Endothelial cell of umbilical vein (primary cell): ENCODE measurements at regions of chr12 and their contacts with region 1.

Region 1: DNA sequence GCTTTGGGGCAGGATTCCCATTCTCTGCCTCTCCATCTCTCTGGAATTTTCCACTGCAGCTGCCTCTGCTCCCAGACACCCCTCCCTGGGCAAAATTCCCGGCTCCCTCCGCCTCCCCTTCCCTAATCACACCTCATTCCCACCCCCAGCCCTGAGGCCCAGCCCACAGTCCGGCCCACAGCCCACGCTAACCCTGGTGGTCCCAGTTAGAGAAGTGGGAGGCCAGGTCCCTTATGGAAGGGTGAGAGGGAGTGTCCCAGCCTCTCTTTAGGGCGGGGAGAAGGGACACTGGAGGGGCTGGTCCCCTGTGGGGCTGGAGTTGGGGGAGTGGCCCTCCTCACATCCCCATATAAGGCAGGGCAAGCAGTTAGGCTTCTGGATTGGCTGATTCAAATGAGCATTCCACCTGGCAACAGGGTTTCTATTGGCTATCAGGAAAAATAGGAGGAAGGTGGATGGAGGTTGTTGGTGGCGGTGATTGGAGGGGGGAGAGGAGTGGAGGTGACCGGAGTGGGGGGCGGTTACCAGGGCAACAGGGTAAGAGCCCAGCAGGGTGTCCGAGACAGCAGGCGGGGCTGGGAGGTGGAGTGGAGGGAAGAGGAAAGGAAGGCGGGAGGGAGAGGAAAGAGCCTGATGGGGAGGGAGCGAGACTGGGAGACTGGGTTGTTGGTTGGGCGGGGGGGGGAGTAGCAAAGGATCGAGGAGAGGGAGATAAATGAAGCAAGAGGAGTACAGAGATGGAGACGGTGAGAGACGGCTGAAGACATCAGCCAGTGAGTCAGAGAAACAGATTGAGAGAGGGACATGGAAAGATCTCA is 1.9 kb upstream of the PTMS start:
- DNase-seq: peak; percentile 99
- H3K4me3 ChIP-seq: peak overlapping the region in 1 of 3 experiments; percentile 36
- H3K27ac ChIP-seq: peak overlapping the region; percentile 70
- H3K4me1 ChIP-seq: peaks cover 38% of the 10 kb centered on the region
- H3K27me3 ChIP-seq: peaks cover 0 to 2% of the 10 kb centered on the region in 2 experiments
- CTCF ChIP-seq: no peak
- POLR2A ChIP-seq: no peak

Region 2: DNA sequence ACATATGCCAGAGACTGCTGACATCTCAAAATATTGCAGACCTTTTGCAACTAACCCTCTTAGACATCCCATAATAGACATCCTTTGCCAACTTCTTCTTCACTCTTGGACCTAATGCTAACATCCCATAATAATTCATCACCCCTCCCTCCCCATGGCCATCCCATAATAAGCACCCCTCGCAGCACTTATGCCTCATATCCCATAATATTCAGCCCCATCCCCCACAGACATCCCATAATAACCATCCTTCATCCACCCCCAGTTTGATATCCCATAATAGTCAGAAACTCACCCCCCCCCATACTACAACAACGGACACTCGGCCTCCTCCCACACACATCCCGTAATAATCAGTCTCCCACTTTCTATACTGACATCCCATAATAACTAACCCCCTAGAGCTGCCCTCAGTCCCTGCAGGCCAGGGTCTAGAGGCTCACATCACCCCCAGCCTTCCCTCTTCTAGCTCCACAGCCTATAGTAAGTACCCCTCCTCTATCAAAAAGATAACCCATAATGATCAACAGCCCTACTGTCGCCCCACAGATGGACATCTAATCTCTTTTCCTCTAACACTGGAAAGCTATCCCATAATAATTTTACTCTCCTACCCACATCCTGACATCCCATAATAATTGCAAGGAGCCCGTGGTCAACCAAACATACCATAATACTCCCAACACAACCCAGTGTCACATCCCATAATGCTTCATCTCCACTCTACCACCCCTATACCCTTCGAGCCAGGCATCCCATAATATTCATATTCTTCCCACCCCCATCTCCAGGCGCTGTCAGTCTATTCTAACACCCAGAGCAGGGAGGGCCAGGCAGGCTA is 156.2 kb before region 1 on chr12:
- CTCF ChIA-PET with region 1: interaction called, 3 read pairs
- POLR2A ChIA-PET with region 1: no interaction called
- dilution Hi-C with region 1: no loop called
- intact Hi-C with region 1: loop called (anchors 2 kb)
- DNase-seq: peak; percentile 42
- H3K4me3 ChIP-seq: no peak overlapping the region
- H3K27ac ChIP-seq: no peak overlapping the region
- H3K4me1 ChIP-seq: peaks cover 36% of the 10 kb centered on the region
- H3K27me3 ChIP-seq: no peaks in the 10 kb centered on the region
- CTCF ChIP-seq: no peak
- POLR2A ChIP-seq: no peak

Region 3: GRCh38 chr12:6723607-6724396 is 40.4 kb before region 1 on chr12 and contains the start of gene COPS7A:
- CTCF ChIA-PET with region 1: interaction called, 12 read pairs
- POLR2A ChIA-PET with region 1: interaction called, 9 read pairs
- dilution Hi-C with region 1: no loop called
- intact Hi-C with region 1: loop called (anchors 1 kb)
- DNase-seq: peak; percentile 98
- H3K4me3 ChIP-seq: peak within 1 kb of the TSS; percentile 45 to 48 (median 47)
- H3K27ac ChIP-seq: peak within 1 kb of the TSS; percentile 52
- H3K4me1 ChIP-seq: peaks cover 11% of the 10 kb centered on the region
- H3K27me3 ChIP-seq: no peaks in the 10 kb centered on the region
- CTCF ChIP-seq: no peak
- POLR2A ChIP-seq: peak; percentile 35
- total RNA-seq, gene COPS7A: 36.5 and 41.1 TPM in 2 replicates

Region 4: GRCh38 chr12:6778574-6779550 is 14.6 kb after region 1 on chr12:
- CTCF ChIA-PET with region 1: interaction called, 70 read pairs
- POLR2A ChIA-PET with region 1: interaction called, 16 read pairs
- dilution Hi-C with region 1: no loop called
- intact Hi-C with region 1: loop called (anchors 1 kb)
- DNase-seq: peak; percentile 94
- H3K4me3 ChIP-seq: peak overlapping the region in 1 of 3 experiments; percentile 6
- H3K27ac ChIP-seq: no peak overlapping the region
- H3K4me1 ChIP-seq: peaks cover 5% of the 10 kb centered on the region
- H3K27me3 ChIP-seq: no peaks in the 10 kb centered on the region
- CTCF ChIP-seq: peak; percentile 93 to 95
- POLR2A ChIP-seq: peak; percentile 22

Region 5: DNA sequence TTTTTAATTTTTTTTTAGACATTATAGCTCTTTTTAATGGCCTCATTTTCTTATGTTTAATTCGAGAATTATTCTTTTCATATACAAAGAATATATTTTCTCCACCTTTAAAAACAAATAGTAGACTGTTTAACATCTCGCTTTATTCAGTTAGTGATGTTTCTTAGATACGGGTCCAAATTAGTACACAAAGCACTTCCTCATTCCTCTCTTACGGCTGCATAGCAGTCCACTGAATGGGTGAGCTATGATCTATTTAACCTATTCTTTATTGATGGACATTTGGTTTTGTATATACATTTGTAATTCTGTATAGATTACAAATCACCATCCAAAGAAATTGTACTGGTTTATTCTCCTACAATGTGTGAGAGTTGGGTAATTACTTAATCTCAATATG is 49.1 kb after region 1 on chr12:
- CTCF ChIA-PET with region 1: interaction called, 11 read pairs
- POLR2A ChIA-PET with region 1: interaction called, 4 read pairs
- dilution Hi-C with region 1: no loop called
- intact Hi-C with region 1: no loop called
- DNase-seq: no peak
- H3K4me3 ChIP-seq: no peak overlapping the region
- H3K27ac ChIP-seq: no peak overlapping the region
- H3K4me1 ChIP-seq: no peaks in the 10 kb centered on the region
- H3K27me3 ChIP-seq: peaks cover 0 to 11% of the 10 kb centered on the region in 2 experiments
- CTCF ChIP-seq: no peak
- POLR2A ChIP-seq: no peak

Region 6: GRCh38 chr12:6825398-6826124 is 61.3 kb after region 1 on chr12:
- CTCF ChIA-PET with region 1: interaction called, 10 read pairs
- POLR2A ChIA-PET with region 1: interaction called, 15 read pairs
- dilution Hi-C with region 1: no loop called
- intact Hi-C with region 1: loop called (anchors 1 kb)
- DNase-seq: peak; percentile 87
- H3K4me3 ChIP-seq: no peak overlapping the region
- H3K27ac ChIP-seq: no peak overlapping the region
- H3K4me1 ChIP-seq: peaks cover 23% of the 10 kb centered on the region
- H3K27me3 ChIP-seq: peaks cover 3% of the 10 kb centered on the region in 2 experiments
- CTCF ChIP-seq: peak; percentile 95
- POLR2A ChIP-seq: no peak